Heart right ventricle (tissue), 16 donors: ENCODE measurements at regions of chr17 and their contacts with region 1.

Region 1: DNA sequence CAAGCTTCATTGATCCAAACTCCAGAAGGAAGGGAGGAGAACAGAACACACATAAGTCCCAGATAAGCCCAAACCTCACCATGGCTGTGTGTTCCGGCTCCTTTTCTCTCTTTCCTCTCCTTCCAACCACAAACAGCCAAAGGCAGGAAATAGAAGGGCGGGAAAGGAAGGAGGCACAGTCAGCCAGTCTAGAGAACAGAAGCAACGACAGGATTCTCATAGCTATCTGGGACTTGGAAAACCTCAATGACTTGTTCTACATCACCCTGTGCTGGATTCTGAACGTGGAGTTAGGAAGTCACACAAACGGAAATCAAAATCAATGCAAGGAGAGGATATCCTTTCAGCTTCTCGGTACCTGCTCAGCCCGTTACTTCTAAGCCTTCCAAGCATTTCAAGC is 9.0 kb downstream of the CRK start:
- DNase-seq: no peak
- ATAC-seq: peak; percentile 18 to 86 (median 56)
- H3K4me3 ChIP-seq: peak overlapping the region in 4 of 10 donors; percentile 2 to 17 (median 14)
- H3K27ac ChIP-seq: peak overlapping the region; percentile 16 to 87 (median 63)
- H3K4me1 ChIP-seq: peaks cover 9 to 69% (median 61%) of the 10 kb centered on the region in 9 donors
- H3K27me3 ChIP-seq: no peaks in the 10 kb centered on the region
- CTCF ChIP-seq: no peak

Region 2: DNA sequence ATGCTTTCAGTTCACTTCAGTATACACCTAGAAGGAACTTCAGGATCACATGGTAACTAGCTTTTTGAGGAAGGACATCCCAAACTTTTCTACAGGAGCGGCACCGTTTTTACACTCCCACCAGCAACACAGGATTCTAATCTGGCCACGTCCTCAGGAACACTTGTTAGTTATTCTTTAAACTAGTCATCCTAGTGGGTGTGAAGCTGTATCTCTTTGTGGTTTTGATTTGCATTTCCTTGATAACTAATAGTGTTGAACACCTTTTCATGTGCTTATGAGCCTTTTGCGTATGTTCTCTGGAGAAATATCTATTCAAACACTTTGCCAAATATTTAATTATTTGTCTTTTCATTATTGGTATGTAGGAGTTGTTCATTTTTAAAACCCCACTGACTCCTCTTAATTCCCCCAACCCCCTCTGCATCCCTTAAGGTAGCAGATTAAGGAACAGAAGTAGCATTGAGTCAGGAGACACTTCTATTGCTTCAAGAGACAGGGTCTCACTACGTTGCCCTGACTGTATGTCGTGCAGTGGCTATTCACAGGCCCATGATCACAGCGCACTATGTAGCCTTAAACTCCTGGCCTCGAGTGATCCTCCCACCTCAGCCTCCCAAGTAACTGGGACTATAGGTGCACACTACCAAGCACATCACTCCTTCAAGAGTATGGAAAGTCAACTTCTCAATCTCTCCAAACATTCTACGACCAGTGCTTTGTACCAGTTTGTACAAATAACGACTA is 72.4 kb before region 1 on chr17:
- intact Hi-C with region 1: loop called in 5 of 10 experiments (anchors 5 to 10 kb)
- DNase-seq: no peak
- ATAC-seq: no peak
- H3K4me3 ChIP-seq: no peak overlapping the region
- H3K27ac ChIP-seq: no peak overlapping the region
- H3K4me1 ChIP-seq: peaks cover 16 to 99% (median 90%) of the 10 kb centered on the region in 9 donors
- H3K27me3 ChIP-seq: no peaks in the 10 kb centered on the region
- CTCF ChIP-seq: no peak

Region 3: GRCh38 chr17:1431631-1432104 is 15.4 kb before region 1 on chr17:
- intact Hi-C with region 1: loop called in 1 of 10 experiments (anchors 1 kb)
- DNase-seq: no peak
- ATAC-seq: peak in 1 of 8 donors; percentile 28
- H3K4me3 ChIP-seq: no peak overlapping the region
- H3K27ac ChIP-seq: peak overlapping the region in 1 of 10 donors; percentile 22
- H3K4me1 ChIP-seq: peaks cover 0 to 48% (median 30%) of the 10 kb centered on the region in 9 donors
- H3K27me3 ChIP-seq: no peaks in the 10 kb centered on the region
- CTCF ChIP-seq: no peak